CD4-positive, alpha-beta memory T cell (primary cell): ENCODE measurements at regions of chr3 and their contacts with region 1.

Region 1: GRCh38 chr3:4978204-4978965 is 852 bp upstream of the BHLHE40 start:
- DNase-seq: peak; percentile 73 to 93 (median 78)
- H3K4me3 ChIP-seq: peak overlapping the region; percentile 54 to 93
- H3K4me3 Mint-ChIP-seq: peak overlapping the region; percentile 93 to 100 (median 98)
- H3K27ac ChIP-seq: peak overlapping the region; percentile 91
- H3K27ac Mint-ChIP-seq: peak overlapping the region; percentile 95 to 100 (median 99)
- H3K4me1 ChIP-seq: peaks cover 48% of the 10 kb centered on the region
- H3K4me1 Mint-ChIP-seq: peaks cover 23 to 64% (median 46%) of the 10 kb centered on the region in 4 donors
- H3K27me3 ChIP-seq: no peaks in the 10 kb centered on the region
- H3K27me3 Mint-ChIP-seq: no peaks in the 10 kb centered on the region

Region 2: GRCh38 chr3:4826237-4827100 is 151.9 kb before region 1 on chr3:
- CTCF ChIA-PET with region 1: interaction called, 40 read pairs
- POLR2A ChIA-PET with region 1: interaction called, 254 read pairs
- intact Hi-C with region 1: loop called (anchors 1 kb)
- DNase-seq: no peak
- H3K4me3 ChIP-seq: peak overlapping the region; percentile 4 to 39
- H3K4me3 Mint-ChIP-seq: peak overlapping the region; percentile 74 to 94 (median 88)
- H3K27ac ChIP-seq: peak overlapping the region; percentile 33
- H3K27ac Mint-ChIP-seq: peak overlapping the region; percentile 88 to 98 (median 96)
- H3K4me1 ChIP-seq: peaks cover 99% of the 10 kb centered on the region
- H3K4me1 Mint-ChIP-seq: peaks cover 77 to 97% (median 93%) of the 10 kb centered on the region in 4 donors
- H3K27me3 ChIP-seq: no peaks in the 10 kb centered on the region
- H3K27me3 Mint-ChIP-seq: peaks cover 0 to 3% of the 10 kb centered on the region in 2 donors

Region 3: GRCh38 chr3:4888913-4889846 is 89.2 kb before region 1 on chr3:
- CTCF ChIA-PET with region 1: interaction called, 3 read pairs
- POLR2A ChIA-PET with region 1: interaction called, 16 read pairs
- intact Hi-C with region 1: loop called (anchors 5 kb)
- DNase-seq: peak in 4 of 5 donors; percentile 39 to 61 (median 50)
- H3K4me3 ChIP-seq: no peak overlapping the region
- H3K4me3 Mint-ChIP-seq: peak overlapping the region in 6 of 8 donors; percentile 7 to 65 (median 43)
- H3K27ac ChIP-seq: no peak overlapping the region
- H3K27ac Mint-ChIP-seq: peak overlapping the region; percentile 53 to 90 (median 74)
- H3K4me1 ChIP-seq: peaks cover 21% of the 10 kb centered on the region
- H3K4me1 Mint-ChIP-seq: peaks cover 15 to 20% (median 19%) of the 10 kb centered on the region in 4 donors
- H3K27me3 ChIP-seq: no peaks in the 10 kb centered on the region
- H3K27me3 Mint-ChIP-seq: no peaks in the 10 kb centered on the region

Region 4: DNA sequence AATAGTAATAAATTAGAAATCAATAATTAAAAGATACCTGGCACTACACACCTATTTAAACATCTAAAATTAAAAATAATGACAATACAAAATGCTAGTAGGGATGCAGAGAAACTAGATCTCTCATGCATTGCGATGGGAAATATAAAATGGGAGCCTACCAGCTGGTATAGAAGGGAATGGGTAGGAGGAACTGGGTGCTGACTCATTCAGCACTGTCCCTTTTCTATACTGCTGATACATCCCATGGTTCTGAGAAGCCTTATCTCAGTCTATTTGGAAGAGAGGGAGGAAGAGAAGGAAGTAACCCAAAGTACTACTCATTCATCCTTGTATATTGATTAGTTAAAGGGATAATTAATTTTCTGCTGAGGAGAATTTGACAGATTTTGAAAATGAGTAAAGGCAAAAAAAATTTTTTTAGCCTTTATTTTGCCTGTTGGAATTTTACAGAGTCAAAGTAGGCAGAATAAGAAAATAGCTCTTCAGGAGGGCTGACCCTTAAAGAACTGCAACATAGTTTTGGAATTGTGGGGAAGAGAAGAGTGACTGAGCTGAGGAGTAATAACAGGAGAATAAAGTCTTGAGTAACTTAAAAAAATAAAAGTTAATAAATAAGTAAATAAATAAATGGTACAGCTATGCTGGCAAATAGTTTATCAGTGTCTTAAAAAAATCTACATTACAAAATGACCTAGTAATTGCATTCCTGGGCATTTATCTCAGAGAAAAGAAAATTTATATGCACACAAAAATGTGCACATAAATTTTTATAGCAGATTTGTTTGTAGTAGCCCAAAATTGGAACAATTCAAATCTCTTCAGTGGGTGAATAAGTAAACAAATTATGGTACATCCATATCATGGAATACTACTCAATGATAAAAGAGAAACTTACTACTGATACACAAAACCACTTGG is 14.5 kb before region 1 on chr3:
- CTCF ChIA-PET with region 1: interaction called, 18 read pairs
- POLR2A ChIA-PET with region 1: interaction called, 67 read pairs
- intact Hi-C with region 1: loop called (anchors 1 kb)
- DNase-seq: no peak
- H3K4me3 ChIP-seq: no peak overlapping the region
- H3K4me3 Mint-ChIP-seq: peak overlapping the region in 1 of 8 donors; percentile 40
- H3K27ac ChIP-seq: no peak overlapping the region
- H3K27ac Mint-ChIP-seq: no peak overlapping the region
- H3K4me1 ChIP-seq: peaks cover 17% of the 10 kb centered on the region
- H3K4me1 Mint-ChIP-seq: peaks cover 17 to 34% (median 27%) of the 10 kb centered on the region in 4 donors
- H3K27me3 ChIP-seq: no peaks in the 10 kb centered on the region
- H3K27me3 Mint-ChIP-seq: no peaks in the 10 kb centered on the region

Region 5: DNA sequence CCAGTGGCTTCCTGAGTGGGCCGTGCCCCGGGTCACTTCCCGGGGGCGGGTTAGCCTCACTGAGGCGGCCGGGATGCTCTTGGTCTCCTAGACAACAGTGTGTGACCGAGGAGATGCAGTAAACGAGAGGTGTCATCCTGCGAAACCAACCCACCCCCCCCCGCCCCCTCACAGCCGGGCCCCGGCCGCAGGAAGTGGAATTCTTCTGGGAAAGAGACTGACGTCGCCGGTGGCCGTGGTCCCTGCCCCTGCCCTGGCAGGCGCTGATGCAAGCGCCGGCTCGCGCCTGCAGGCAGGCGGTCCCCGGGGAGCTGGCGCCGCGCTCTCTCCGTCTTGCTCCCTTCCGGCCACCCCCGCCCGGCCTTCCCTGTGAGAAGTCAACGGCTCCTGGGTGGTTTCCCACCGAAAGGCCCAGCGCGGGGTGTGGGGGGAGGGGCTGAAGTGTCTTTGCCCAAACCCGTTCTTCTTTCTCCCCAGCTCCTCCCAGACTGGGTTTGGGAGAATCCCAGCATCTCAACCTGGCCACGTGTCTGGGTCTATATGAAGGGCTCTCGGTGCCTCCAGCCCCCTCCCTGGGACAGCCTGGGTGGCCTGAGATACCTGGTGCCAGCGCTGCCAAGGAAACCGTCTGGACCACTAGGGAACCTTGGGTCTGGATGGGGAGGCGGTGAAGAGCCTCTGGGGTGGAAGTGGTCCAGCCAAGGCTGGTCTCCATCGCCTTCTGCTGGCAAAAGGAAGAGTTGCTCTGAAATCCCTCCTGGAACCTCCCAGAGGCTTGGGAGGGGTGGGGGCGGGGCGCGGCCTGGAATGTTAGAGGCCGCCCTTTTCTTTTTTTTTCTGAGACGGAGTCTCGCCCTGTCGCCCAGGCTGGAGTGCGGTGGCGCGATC is 48.2 kb after region 1 on chr3:
- CTCF ChIA-PET with region 1: interaction called, 251 read pairs
- POLR2A ChIA-PET with region 1: interaction called, 580 read pairs
- intact Hi-C with region 1: loop called (anchors 1 kb)
- DNase-seq: peak; percentile 54 to 77 (median 57)
- H3K4me3 ChIP-seq: peak overlapping the region in 1 of 2 donors; percentile 71
- H3K4me3 Mint-ChIP-seq: peak overlapping the region; percentile 85 to 93 (median 87)
- H3K27ac ChIP-seq: peak overlapping the region; percentile 50
- H3K27ac Mint-ChIP-seq: peak overlapping the region; percentile 81 to 97 (median 93)
- H3K4me1 ChIP-seq: peaks cover 13% of the 10 kb centered on the region
- H3K4me1 Mint-ChIP-seq: peaks cover 15 to 35% (median 23%) of the 10 kb centered on the region in 4 donors
- H3K27me3 ChIP-seq: no peaks in the 10 kb centered on the region
- H3K27me3 Mint-ChIP-seq: no peaks in the 10 kb centered on the region

Region 6: DNA sequence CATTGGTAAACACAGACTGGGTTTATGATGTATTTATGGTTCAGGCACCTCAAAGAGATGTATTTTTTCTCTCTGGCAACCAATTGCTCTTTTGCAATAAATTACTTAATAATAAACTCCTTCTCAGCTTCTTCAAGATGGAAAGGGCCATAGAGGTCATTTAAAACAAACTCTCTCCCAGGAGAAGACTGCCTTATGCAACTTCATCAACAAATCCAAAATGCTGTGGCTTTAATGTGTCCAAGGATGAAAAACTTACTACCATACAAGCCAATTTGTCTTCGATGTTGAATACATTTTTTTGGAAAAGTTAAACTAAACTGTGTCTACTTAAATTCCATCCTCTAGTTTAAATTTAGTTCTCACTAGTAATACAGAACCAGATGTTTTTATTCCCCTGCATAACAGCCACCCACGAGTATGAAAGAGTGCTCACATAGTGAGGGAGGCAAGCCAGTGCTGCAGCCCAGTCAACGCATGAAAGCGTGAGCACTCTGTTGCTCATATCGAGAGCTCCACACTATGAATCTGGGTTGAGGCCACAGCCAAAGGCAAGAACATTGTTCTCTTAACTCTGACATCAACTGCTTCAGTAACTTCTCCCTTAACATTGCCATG is 1121.2 kb after region 1 on chr3:
- CTCF ChIA-PET with region 1: no interaction called
- POLR2A ChIA-PET with region 1: no interaction called
- intact Hi-C with region 1: no loop called
- DNase-seq: no peak
- H3K4me3 ChIP-seq: no peak overlapping the region
- H3K4me3 Mint-ChIP-seq: no peak overlapping the region
- H3K27ac ChIP-seq: no peak overlapping the region
- H3K27ac Mint-ChIP-seq: no peak overlapping the region
- H3K4me1 ChIP-seq: no peaks in the 10 kb centered on the region
- H3K4me1 Mint-ChIP-seq: no peaks in the 10 kb centered on the region
- H3K27me3 ChIP-seq: no peaks in the 10 kb centered on the region
- H3K27me3 Mint-ChIP-seq: no peaks in the 10 kb centered on the region